Endothelial cell of umbilical vein (primary cell): ENCODE measurements at regions of chr5 and their contacts with region 1.

Region 1: DNA sequence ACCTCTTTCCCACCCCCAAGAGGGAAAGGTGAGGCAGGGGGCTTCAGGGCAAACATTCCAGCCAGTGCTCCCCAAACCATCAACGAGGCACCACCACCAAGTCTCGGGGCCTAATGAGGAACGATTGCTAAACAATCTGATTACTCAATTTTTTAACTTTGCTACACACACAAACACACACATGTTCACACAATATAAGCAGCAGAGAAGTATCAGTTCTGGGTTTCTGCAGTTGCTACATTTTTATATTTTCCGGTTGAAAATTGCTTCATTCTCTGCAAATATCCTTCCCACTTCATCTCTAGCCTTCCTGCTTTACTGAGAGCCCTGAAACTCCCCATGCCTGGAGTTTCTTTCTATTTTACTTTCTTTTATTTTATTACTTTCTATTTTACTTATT is 60.2 kb downstream of the FEM1C start:
- DNase-seq: no peak
- H3K4me3 ChIP-seq: no peak overlapping the region
- H3K27ac ChIP-seq: no peak overlapping the region
- H3K4me1 ChIP-seq: no peaks in the 10 kb centered on the region
- H3K27me3 ChIP-seq: no peaks in the 10 kb centered on the region
- CTCF ChIP-seq: no peak
- POLR2A ChIP-seq: no peak

Region 2: DNA sequence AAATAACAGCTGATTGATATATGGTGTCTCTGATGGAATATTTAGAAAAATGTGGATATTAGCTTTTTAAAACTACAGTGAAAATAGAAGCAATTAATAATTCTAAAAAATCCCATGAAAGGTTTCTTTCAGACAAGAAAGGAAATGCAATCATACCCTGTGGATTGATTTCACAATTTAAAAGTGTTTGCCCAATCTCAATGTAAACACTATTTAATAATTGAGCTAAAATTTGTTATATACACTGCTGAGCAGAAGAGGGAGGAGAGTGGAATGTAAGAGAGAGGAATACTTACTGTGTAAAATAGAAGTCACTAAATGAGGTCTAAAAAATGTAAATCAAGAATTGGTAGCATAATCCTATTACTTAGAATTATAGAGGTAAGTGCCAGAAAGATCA is 16.7 kb before region 1 on chr5:
- CTCF ChIA-PET with region 1: no interaction called
- POLR2A ChIA-PET with region 1: no interaction called
- dilution Hi-C with region 1: no loop called
- intact Hi-C with region 1: loop called (anchors 2 kb)
- DNase-seq: no peak
- H3K4me3 ChIP-seq: no peak overlapping the region
- H3K27ac ChIP-seq: no peak overlapping the region
- H3K4me1 ChIP-seq: no peaks in the 10 kb centered on the region
- H3K27me3 ChIP-seq: no peaks in the 10 kb centered on the region
- CTCF ChIP-seq: no peak
- POLR2A ChIP-seq: no peak

Region 3: GRCh38 chr5:116361171-116361967 is 877.0 kb after region 1 on chr5:
- CTCF ChIA-PET with region 1: no interaction called
- POLR2A ChIA-PET with region 1: no interaction called
- dilution Hi-C with region 1: no loop called
- intact Hi-C with region 1: no loop called
- DNase-seq: no peak
- H3K4me3 ChIP-seq: no peak overlapping the region
- H3K27ac ChIP-seq: no peak overlapping the region
- H3K4me1 ChIP-seq: no peaks in the 10 kb centered on the region
- H3K27me3 ChIP-seq: no peaks in the 10 kb centered on the region
- CTCF ChIP-seq: no peak
- POLR2A ChIP-seq: no peak